Heart left ventricle (tissue), 16 donors: ENCODE measurements at regions of chr18 and their contacts with region 1.

Region 1: GRCh38 chr18:40935423-40935822 is 1019.6 kb upstream of the PIK3C3 start:
- DNase-seq: no peak
- ATAC-seq: no peak
- H3K4me3 ChIP-seq: no peak overlapping the region
- H3K27ac ChIP-seq: no peak overlapping the region
- H3K4me1 ChIP-seq: no peaks in the 10 kb centered on the region
- H3K27me3 ChIP-seq: no peaks in the 10 kb centered on the region
- CTCF ChIP-seq: peak in 9 of 12 donors; percentile 12 to 38 (median 27)
- POLR2A ChIP-seq: no peak

Region 2: DNA sequence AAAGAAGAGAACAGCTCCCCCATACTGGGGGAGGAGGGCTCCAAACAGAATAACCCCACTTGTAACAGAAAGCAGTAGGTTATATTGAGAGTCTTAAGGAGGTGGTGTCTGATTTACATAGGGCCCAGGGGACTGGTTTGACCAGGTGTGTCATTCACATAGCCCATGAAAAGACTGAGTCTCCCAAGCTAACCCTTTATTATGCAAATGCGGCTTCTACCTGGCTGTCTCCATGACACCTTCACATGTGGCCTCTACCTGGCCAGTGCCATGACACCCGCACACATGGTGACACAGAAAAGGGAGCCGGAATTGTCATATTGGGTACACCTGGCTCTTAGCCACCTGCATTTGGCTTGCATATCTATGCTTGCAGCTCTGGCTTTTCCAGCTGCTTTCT is 37.5 kb before region 1 on chr18:
- intact Hi-C with region 1: no loop called
- DNase-seq: no peak
- ATAC-seq: no peak
- H3K4me3 ChIP-seq: no peak overlapping the region
- H3K27ac ChIP-seq: no peak overlapping the region
- H3K4me1 ChIP-seq: no peaks in the 10 kb centered on the region
- H3K27me3 ChIP-seq: no peaks in the 10 kb centered on the region
- CTCF ChIP-seq: no peak
- POLR2A ChIP-seq: no peak

Region 3: DNA sequence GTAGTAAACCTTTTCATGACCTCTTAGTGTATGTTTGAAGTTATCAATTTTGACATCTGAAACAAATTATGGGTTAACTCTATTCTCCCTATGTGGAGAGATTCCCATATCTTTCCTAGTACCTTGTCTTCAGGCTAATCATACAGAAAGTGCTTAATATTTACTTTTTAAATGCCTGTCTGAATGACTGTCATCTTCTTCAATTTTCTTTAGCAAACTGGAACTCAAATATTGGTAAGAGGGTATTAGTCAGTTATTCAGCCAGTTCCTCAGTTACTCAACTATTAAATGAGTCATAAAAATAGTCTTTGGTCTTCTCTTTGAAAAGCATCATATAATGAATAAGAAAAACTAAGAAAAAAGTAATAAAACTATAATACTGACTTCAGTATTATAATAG is 18.4 kb before region 1 on chr18:
- intact Hi-C with region 1: loop called in 1 of 10 experiments (anchors 1 kb)
- DNase-seq: no peak
- ATAC-seq: no peak
- H3K4me3 ChIP-seq: no peak overlapping the region
- H3K27ac ChIP-seq: no peak overlapping the region
- H3K4me1 ChIP-seq: no peaks in the 10 kb centered on the region
- H3K27me3 ChIP-seq: no peaks in the 10 kb centered on the region
- CTCF ChIP-seq: no peak
- POLR2A ChIP-seq: no peak

Region 4: GRCh38 chr18:41378598-41378997 is 443.2 kb after region 1 on chr18:
- intact Hi-C with region 1: loop called in 1 of 10 experiments (anchors 10 kb)
- DNase-seq: no peak
- ATAC-seq: no peak
- H3K4me3 ChIP-seq: no peak overlapping the region
- H3K27ac ChIP-seq: no peak overlapping the region
- H3K4me1 ChIP-seq: no peaks in the 10 kb centered on the region
- H3K27me3 ChIP-seq: no peaks in the 10 kb centered on the region
- CTCF ChIP-seq: peak in 2 of 12 donors; percentile 6 to 19
- POLR2A ChIP-seq: no peak

Region 5: GRCh38 chr18:41745166-41746049 is 810.0 kb after region 1 on chr18:
- intact Hi-C with region 1: loop called in 1 of 10 experiments (anchors 10 kb)
- DNase-seq: peak; percentile 11 to 60 (median 25)
- ATAC-seq: peak; percentile 53 to 75 (median 65)
- H3K4me3 ChIP-seq: no peak overlapping the region
- H3K27ac ChIP-seq: no peak overlapping the region
- H3K4me1 ChIP-seq: no peaks in the 10 kb centered on the region
- H3K27me3 ChIP-seq: no peaks in the 10 kb centered on the region
- CTCF ChIP-seq: peak; percentile 25 to 66 (median 56)
- POLR2A ChIP-seq: no peak